ENCODE measurements at regions of chr6 and their contacts with region 1.

Region 1: DNA sequence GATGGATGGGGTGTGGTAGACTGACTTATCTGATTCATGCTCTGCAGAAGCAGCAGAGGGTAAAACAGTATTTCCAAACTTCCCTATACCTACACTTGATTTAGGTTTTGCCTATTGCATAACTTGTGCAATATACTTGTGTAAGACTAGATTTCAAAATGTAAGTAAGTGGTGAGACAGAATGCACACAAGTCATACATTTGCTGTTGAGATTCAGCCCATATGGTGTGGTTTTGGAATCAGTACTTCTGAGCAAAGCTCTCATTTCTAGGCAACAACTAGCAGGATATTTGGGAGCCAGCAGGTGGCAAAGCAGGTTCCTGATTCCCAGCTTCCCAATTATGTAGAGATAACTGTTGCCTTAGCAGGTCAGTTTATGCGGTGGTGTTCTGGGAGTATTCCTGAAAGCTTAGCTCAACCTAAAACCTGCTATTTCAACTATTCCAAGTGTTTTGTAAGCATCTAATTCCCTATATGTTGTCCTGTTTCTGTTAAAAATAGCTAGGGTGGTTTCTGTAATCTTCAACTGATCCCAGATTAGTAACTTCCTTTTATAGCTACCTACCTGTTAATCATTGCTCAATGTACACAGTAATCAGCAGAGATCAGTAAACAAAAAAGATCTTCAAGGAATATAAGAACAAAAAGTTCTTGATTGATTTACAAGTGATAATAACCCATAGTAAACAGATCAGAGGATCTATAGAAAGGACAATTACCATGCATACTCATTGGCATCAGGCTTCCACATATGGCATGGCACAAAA is 8.5 kb upstream of the FABP7 start:
- DNase-seq: peak; percentile 25
- ATAC-seq: peak; percentile 93
- H3K4me3 ChIP-seq: no peak overlapping the region
- H3K27ac ChIP-seq: no peak overlapping the region
- H3K4me1 ChIP-seq: peaks cover 9% of the 10 kb centered on the region
- H3K27me3 ChIP-seq: no peaks in the 10 kb centered on the region
- CTCF ChIP-seq: peak; percentile 71
- EP300 ChIP-seq: no peak
- POLR2A ChIP-seq: no peak
- RAD21 ChIP-seq: peak; percentile 62

Region 2: GRCh38 chr6:122789182-122790027 is 18.4 kb after region 1 on chr6 and contains the start of gene SMPDL3A:
- CTCF ChIA-PET with region 1: interaction called, 5 read pairs
- POLR2A ChIA-PET with region 1: interaction called, 14 read pairs
- in situ Hi-C with region 1: no loop called
- intact Hi-C with region 1: loop called (anchors 1 kb)
- DNase-seq: peak; percentile 76
- ATAC-seq: peak; percentile 88
- H3K4me3 ChIP-seq: peak within 1 kb of the TSS; percentile 73 to 95 (median 77)
- H3K27ac ChIP-seq: peak within 1 kb of the TSS; percentile 91
- H3K4me1 ChIP-seq: peaks cover 44% of the 10 kb centered on the region
- H3K27me3 ChIP-seq: no peaks in the 10 kb centered on the region; a peak in 1 of 5 replicates
- CTCF ChIP-seq: peak; percentile 91
- EP300 ChIP-seq: peak in 1 of 2 experiments; percentile 13; a peak in 1 of 4 replicates
- POLR2A ChIP-seq: peak; percentile 55 to 72
- RAD21 ChIP-seq: peak; percentile 90
- total RNA-seq, gene SMPDL3A: 6.4 and 7.8 TPM in 2 replicates

Measured in HepG2 (cell line).